GM10248 (cell line): ENCODE measurements at regions of chr2 and their contacts with region 1.

Region 1: DNA sequence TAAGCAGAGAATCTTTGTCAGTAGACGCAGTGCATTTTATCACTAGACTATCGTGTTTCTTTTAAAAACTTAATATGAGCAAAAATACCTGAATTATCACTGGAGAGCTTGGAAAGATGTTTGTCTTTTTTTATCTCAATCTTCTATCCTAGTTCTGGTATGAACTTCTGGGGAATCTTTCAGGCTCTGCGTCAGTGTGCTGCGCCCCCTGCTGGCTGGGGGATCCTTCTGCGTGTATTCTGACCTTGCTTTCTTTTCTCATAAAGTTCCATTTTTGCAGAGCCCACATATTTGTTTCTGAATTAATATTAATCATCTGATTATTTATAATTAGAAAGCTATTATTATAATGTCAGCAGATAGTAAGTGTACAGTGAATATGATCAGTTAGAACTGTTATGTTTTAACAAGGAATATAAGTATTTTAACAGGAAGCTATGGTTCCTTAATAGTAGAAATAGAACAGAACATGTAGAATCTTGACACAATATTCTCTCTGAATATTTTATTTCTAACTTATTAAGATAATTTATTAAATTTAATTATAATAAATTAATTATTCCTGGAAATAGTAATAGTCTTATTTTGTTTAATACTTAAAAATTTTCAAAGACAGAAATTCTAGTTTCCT is 945.0 kb upstream of the CRIM1 start:
- DNase-seq: peak; percentile 35
- CTCF ChIP-seq: peak; percentile 88

Region 2: DNA sequence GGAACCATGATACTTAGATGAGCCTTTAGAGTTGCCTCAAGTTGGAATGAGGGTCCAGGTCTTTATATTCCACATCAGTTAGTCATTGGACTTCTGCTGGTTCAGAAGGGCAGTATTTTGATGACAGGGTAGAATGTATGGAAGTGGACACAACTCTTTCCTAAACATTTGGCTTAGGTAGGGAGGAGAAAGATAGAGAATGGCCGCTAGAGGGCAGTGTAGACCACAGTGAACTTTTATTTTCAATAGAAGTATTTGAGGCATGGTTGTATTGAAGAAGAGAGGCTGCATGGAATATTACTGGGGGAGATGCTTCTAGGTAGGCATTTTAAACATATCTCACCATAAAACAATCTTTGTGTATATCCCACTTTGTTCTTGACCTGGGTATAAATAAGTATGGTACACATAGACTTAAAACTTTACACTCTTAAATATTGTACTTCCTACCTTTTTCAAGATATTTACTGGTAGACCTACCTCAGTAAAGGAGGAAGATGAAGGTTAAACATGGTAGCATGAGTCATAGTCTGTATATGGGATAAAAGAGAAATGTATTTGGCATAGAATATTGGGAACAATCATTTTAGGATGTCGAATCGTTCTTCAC is 1313.9 kb before region 1 on chr2:
- CTCF ChIA-PET with region 1: interaction called, 12 read pairs
- POLR2A ChIA-PET with region 1: no interaction called
- DNase-seq: peak; percentile 15
- CTCF ChIP-seq: peak; percentile 56

Region 3: GRCh38 chr2:35365859-35366258 is 44.7 kb before region 1 on chr2:
- CTCF ChIA-PET with region 1: no interaction called
- POLR2A ChIA-PET with region 1: no interaction called
- DNase-seq: no peak
- CTCF ChIP-seq: no peak

Region 4: GRCh38 chr2:35421485-35421884 is 10.9 kb after region 1 on chr2:
- CTCF ChIA-PET with region 1: interaction called, 25 read pairs
- POLR2A ChIA-PET with region 1: no interaction called
- DNase-seq: no peak
- CTCF ChIP-seq: no peak